Right ventricle myocardium inferior (tissue), 1 donor: ENCODE measurements at regions of chr22 and their contacts with region 1.

Region 1: DNA sequence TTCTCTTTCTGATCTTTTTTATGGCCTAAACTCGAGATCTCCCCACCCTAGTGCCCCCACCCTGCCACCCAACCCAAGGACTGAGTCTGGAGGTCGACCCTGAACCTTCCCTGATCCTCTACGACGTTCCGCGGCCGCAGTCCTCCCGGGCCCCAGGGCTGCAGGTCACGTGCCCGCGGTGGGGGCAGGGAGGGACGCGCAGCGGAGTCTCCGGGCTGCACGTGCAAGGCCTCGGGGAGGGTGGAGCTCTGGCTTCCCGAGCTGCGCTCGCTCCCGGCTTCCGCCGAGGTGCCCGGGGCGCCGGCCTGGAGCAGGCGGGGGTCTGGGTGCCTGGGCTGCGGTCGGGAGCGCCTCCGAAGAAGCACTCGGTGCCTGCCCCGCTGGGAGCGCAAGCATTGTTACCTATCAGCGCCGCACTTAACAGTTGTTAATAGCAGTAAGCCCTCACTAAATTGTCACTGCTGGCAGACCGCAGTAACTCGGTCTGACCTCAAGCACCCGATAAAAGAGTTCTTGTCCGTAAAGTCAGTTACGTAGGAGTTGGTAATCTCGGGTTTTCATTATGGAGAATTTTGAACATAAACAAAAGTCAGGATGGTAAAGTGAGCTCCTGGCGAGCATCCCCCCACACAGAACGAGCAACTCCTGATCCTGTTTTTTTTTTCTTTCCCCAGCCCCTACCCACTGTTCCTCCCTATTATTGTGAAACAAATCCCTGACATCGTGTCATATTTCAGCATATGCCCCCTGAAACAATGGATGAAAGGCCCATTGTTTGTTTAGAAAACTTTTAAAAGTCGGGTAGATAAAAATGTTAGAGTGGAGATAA is 69.7 kb upstream of the EP300 start:
- DNase-seq: peak; percentile 98
- ATAC-seq: peak; percentile 95

Region 2: GRCh38 chr22:40950962-40951794 is 71.5 kb before region 1 on chr22 and contains the start of gene RBX1:
- intact Hi-C with region 1: loop called (anchors 1 kb)
- DNase-seq: peak; percentile 99
- ATAC-seq: peak; percentile 97
- total RNA-seq, gene RBX1: 74.1 TPM

Region 3: GRCh38 chr22:41171996-41172395 is 149.3 kb after region 1 on chr22:
- intact Hi-C with region 1: no loop called
- DNase-seq: no peak
- ATAC-seq: no peak